ENCODE measurements at regions of chr2 and their contacts with region 1.

Region 1: GRCh38 chr2:57368190-57368589 is 678.4 kb upstream of the VRK2 start:
- DNase-seq: no peak
- ATAC-seq: no peak
- H3K4me3 ChIP-seq: no peak overlapping the region
- H3K27ac ChIP-seq: no peak overlapping the region
- H3K4me1 ChIP-seq: no peaks in the 10 kb centered on the region
- H3K27me3 ChIP-seq: no peaks in the 10 kb centered on the region
- CTCF ChIP-seq: no peak

Region 2: DNA sequence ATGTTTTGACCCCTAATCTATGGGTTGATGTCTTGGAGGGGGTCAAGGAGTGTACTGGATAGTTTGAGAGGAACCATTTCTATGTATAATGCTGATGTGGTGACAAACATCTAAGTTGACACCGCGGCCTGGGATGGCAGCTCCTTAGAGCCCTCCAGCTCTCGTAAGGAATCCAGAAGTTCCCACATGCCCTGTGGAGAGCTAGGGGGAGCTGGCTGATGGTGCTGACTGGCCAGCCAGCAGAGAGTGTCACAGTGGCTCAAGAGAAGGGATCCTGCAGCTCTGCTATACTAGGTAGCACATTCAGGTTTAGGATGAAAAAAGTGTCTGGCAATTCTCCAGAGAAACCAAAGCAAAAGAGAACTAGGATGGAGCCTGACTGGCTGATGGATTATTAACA is 163.8 kb before region 1 on chr2:
- intact Hi-C with region 1: loop called in 1 of 10 experiments (anchors 5 kb)
- DNase-seq: no peak
- ATAC-seq: no peak
- H3K4me3 ChIP-seq: no peak overlapping the region
- H3K27ac ChIP-seq: no peak overlapping the region
- H3K4me1 ChIP-seq: no peaks in the 10 kb centered on the region
- H3K27me3 ChIP-seq: no peaks in the 10 kb centered on the region
- CTCF ChIP-seq: no peak

Region 3: GRCh38 chr2:57417007-57417406 is 48.8 kb after region 1 on chr2:
- intact Hi-C with region 1: no loop called
- DNase-seq: no peak
- ATAC-seq: no peak
- H3K4me3 ChIP-seq: no peak overlapping the region
- H3K27ac ChIP-seq: no peak overlapping the region
- H3K4me1 ChIP-seq: no peaks in the 10 kb centered on the region
- H3K27me3 ChIP-seq: no peaks in the 10 kb centered on the region
- CTCF ChIP-seq: no peak

Measured in heart right ventricle (tissue), 16 donors.